ENCODE measurements at regions of chr5 and their contacts with region 1.

Region 1: GRCh38 chr5:76771705-76772405 is 47.0 kb upstream of the F2RL1 start:
- DNase-seq: no peak
- ATAC-seq: no peak
- H3K4me3 Mint-ChIP-seq: no peak overlapping the region
- H3K27ac Mint-ChIP-seq: no peak overlapping the region
- H3K4me1 Mint-ChIP-seq: peaks cover 3% of the 10 kb centered on the region
- H3K27me3 Mint-ChIP-seq: no peaks in the 10 kb centered on the region

Region 2: GRCh38 chr5:76715736-76716455 is 56.0 kb before region 1 on chr5 and contains the start of gene F2R:
- POLR2A ChIA-PET with region 1: interaction called, 11 read pairs
- DNase-seq: peak; percentile 78
- ATAC-seq: peak; percentile 73
- H3K4me3 Mint-ChIP-seq: peak within 1 kb of the TSS; percentile 85
- H3K27ac Mint-ChIP-seq: peak within 1 kb of the TSS; percentile 78
- H3K4me1 Mint-ChIP-seq: peaks cover 25% of the 10 kb centered on the region
- H3K27me3 Mint-ChIP-seq: peaks cover 25% of the 10 kb centered on the region
- total RNA-seq, gene F2R: 22.2 to 23.7 TPM